ENCODE measurements at regions of chr1 and their contacts with region 1.

Region 1: DNA sequence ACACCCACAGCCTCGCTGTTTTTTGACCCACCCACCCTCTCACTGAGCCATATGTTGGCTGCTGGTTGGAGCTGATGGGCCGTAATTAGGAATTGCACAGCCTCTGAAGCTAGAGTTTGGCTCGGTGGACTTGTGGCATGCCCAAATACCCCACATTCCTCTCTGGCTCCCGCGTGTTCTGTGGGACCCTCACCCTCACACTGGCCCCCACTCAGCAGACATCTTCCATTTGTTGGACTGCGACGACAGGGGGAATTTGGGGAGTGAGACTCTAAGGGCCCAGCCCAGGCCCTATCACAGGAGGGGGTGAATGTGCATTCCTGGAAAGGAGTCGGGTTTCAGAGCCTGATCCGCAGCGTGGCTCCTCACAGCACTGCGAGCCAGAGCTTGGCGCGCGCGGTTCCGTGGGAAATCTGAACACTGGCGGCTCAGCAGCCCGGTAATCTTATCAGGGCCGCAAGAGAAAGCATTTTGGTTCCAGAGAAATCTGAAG is 5.2 kb downstream of the RCSD1 start:
- DNase-seq: no peak
- ATAC-seq: no peak
- H3K4me3 ChIP-seq: no peak overlapping the region
- H3K4me3 Mint-ChIP-seq: peak overlapping the region in 7 of 10 donors; percentile 23 to 99 (median 85)
- H3K27ac ChIP-seq: peak overlapping the region; percentile 61
- H3K27ac Mint-ChIP-seq: peak overlapping the region in 8 of 9 donors; percentile 53 to 95 (median 86)
- H3K4me1 ChIP-seq: peaks cover 67 to 76% of the 10 kb centered on the region in 2 donors
- H3K4me1 Mint-ChIP-seq: peaks cover 71 to 90% (median 82%) of the 10 kb centered on the region in 7 donors
- H3K27me3 ChIP-seq: no peaks in the 10 kb centered on the region
- H3K27me3 Mint-ChIP-seq: no peaks in the 10 kb centered on the region

Region 2: GRCh38 chr1:167605576-167605975 is 29.6 kb before region 1 on chr1:
- CTCF ChIA-PET with region 1: interaction called, 283 read pairs
- POLR2A ChIA-PET with region 1: interaction called, 276 read pairs
- intact Hi-C with region 1: loop called (anchors 1 kb)
- DNase-seq: no peak
- ATAC-seq: no peak
- H3K4me3 ChIP-seq: no peak overlapping the region
- H3K4me3 Mint-ChIP-seq: peak overlapping the region in 1 of 10 donors; percentile 21
- H3K27ac ChIP-seq: no peak overlapping the region
- H3K27ac Mint-ChIP-seq: peak overlapping the region in 2 of 9 donors; percentile 42 to 56
- H3K4me1 ChIP-seq: peaks cover 23 to 28% of the 10 kb centered on the region in 2 donors
- H3K4me1 Mint-ChIP-seq: peaks cover 20 to 43% (median 35%) of the 10 kb centered on the region in 7 donors
- H3K27me3 ChIP-seq: no peaks in the 10 kb centered on the region
- H3K27me3 Mint-ChIP-seq: peaks cover 0 to 4% (median 0%) of the 10 kb centered on the region in 5 donors

Region 3: DNA sequence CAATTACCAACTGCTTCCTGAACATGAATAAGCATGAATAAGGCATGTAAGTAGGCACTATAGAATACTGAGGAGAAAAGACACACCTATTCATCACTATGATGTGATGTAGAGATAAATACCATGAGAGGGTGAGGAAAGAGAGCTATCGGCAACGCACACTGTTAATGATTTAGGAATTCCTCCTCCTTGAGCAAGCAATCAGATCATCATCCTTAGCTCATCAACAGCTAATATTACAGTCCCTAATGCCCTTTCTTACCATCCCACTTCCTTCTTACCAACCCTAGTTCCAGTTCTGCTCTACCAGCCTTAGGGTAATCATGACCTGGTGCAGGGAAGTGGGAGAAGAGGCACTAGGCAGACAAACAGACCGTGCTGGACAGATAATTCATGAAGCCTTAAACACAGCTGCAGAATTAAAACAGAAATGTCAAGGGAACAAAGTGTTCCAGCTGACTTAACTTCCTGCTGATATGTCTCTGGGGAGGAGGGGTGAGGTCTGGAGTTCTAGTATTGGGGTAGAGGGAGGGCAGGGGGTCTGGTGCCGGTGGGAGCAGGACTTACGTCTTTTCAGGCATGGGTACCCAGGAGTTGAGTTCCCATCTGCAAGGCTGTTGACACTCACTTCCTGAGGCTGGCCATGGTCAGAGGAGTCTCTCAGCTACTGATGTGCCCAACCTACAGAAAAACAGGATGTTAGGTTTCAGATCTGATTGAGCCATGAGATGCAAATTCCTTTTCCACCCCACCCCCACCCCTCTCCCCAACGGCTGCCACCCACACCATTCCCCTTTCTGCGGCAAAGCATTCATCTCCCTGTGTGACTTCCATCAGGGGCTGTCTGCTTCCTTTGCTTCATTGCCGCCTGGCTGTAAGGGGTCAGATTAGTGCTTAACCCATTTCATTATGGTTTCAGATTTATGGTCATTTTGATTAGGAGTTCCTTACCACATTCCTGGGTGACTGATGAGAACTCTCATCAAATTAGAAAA is 17.8 kb before region 1 on chr1:
- CTCF ChIA-PET with region 1: interaction called, 47 read pairs
- POLR2A ChIA-PET with region 1: interaction called, 254 read pairs
- intact Hi-C with region 1: loop called (anchors 1 to 2 kb)
- DNase-seq: peak in 3 of 9 donors; percentile 22 to 28 (median 22)
- ATAC-seq: peak; percentile 85
- H3K4me3 ChIP-seq: peak overlapping the region; percentile 14
- H3K4me3 Mint-ChIP-seq: peak overlapping the region; percentile 73 to 96 (median 78)
- H3K27ac ChIP-seq: peak overlapping the region; percentile 66
- H3K27ac Mint-ChIP-seq: peak overlapping the region; percentile 83 to 96 (median 90)
- H3K4me1 ChIP-seq: peaks cover 16 to 35% of the 10 kb centered on the region in 2 donors
- H3K4me1 Mint-ChIP-seq: peaks cover 47 to 83% (median 69%) of the 10 kb centered on the region in 7 donors
- H3K27me3 ChIP-seq: no peaks in the 10 kb centered on the region
- H3K27me3 Mint-ChIP-seq: no peaks in the 10 kb centered on the region

Region 4: DNA sequence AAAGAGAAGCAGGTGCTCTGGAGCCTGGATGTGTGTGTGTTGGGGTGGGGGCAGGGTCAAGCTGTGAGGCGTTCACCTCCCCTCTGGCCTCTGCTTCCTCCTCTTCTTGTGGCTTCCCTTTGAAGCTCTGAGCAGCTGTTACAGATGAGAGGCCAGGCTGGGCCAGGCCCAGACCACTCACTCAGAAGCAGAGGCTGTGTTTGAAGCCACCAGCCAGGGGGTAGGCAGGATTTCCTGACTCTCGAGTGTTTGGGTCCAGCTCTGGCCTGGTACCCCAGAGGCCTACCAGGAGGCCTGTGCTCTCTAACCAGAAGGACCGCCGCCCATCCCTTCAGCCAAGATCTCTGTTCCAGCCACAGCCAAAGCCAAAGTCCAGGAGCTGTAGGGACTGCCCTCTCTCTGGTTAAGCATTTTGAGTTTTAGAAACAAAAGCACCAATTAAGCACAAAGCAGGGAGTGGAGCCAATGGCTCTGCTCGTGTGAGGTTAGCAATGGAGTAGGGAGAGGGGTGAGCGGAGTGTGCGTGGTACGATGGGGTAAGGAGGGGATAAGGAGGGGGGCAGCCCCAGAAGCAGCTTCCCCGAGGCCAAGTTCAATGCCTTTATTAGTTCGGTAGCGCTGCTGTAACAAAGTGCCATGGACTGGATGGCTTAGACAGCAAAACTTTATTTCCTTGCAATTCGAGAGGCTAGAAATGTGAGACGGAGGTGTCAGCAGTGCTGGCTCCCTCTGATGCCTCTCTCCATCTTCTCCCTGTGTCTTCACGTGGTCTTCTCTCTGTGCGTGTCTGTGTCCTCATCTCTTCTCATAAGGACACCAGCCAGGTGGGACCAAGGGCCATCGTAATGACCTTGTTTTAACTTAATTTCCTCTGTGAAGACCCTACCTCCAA is 15.3 kb after region 1 on chr1:
- CTCF ChIA-PET with region 1: interaction called, 11 read pairs
- POLR2A ChIA-PET with region 1: interaction called, 16 read pairs
- intact Hi-C with region 1: loop called in 1 of 2 experiments (anchors 2 kb)
- DNase-seq: no peak
- ATAC-seq: peak; percentile 67
- H3K4me3 ChIP-seq: no peak overlapping the region
- H3K4me3 Mint-ChIP-seq: peak overlapping the region; percentile 12 to 86 (median 66)
- H3K27ac ChIP-seq: peak overlapping the region; percentile 59
- H3K27ac Mint-ChIP-seq: peak overlapping the region; percentile 75 to 94 (median 90)
- H3K4me1 ChIP-seq: peaks cover 75 to 77% of the 10 kb centered on the region in 2 donors
- H3K4me1 Mint-ChIP-seq: peaks cover 70 to 96% (median 87%) of the 10 kb centered on the region in 7 donors
- H3K27me3 ChIP-seq: no peaks in the 10 kb centered on the region
- H3K27me3 Mint-ChIP-seq: no peaks in the 10 kb centered on the region

Measured in naive thymus-derived CD4-positive, alpha-beta T cell (primary cell).